ENCODE measurements at regions of chr1 and their contacts with region 1.

Region 1: DNA sequence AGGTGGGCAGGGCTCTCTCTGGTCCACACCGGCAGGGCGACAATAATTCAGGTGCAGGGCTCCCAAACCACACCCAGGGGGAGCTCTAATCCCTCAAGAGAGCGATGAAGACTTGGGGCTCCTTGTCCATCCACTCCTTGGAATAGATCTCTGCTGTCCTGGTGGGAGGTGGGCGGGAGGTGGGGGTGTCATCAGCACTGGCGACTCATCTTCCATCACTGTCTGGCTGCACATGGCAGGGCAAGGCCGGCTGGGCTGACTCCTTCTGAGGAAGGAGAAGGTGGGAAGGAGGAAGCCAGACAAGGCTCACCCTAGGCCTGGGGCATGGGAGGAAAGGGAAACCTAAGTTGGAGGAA is 29.3 kb downstream of the TNNT2 start:
- DNase-seq: peak; percentile 53
- ATAC-seq: peak; percentile 93
- H3K4me3 ChIP-seq: no peak overlapping the region
- H3K27ac ChIP-seq: no peak overlapping the region
- H3K4me1 ChIP-seq: peaks cover 2 to 15% of the 10 kb centered on the region in 2 experiments; a peak in 3 of 4 replicates
- H3K27me3 ChIP-seq: peaks cover 12% of the 10 kb centered on the region; the same call in 1 of the 2 replicates
- CTCF ChIP-seq: peak; percentile 79 to 80 (median 79)
- POLR2A ChIP-seq: no peak
- RAD21 ChIP-seq: peak; percentile 72

Region 2: DNA sequence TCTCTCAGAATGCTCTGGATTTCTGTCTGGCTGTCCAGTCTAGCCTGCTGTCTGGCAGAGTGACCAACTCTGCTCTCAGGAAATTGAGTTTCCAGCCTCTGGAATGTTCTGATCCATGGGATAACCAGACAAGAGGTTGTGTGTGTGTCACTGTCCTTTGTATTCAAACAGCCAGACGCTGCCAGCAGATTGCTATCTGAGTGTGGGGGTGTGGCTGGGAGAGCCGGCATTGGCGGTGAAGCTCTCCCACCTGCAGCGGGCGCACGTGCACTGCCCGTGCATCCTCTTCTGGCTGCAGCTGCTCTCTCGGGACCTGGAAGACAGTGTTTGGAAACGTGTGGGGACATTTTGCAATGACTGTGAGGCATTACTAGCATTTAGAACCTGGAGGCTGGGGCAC is 38.8 kb before region 1 on chr1:
- CTCF ChIA-PET with region 1: interaction called, 14 read pairs
- POLR2A ChIA-PET with region 1: no interaction called
- RAD21 ChIA-PET with region 1: no interaction called
- intact Hi-C with region 1: no loop called
- DNase-seq: peak; percentile 39
- ATAC-seq: peak; percentile 74
- H3K4me3 ChIP-seq: no peak overlapping the region
- H3K27ac ChIP-seq: no peak overlapping the region
- H3K4me1 ChIP-seq: peaks cover 36 to 60% of the 10 kb centered on the region in 2 experiments
- H3K27me3 ChIP-seq: no peaks in the 10 kb centered on the region
- CTCF ChIP-seq: peak in 2 of 3 experiments; percentile 12 to 51; a peak in 4 of 6 replicates
- POLR2A ChIP-seq: no peak
- RAD21 ChIP-seq: peak; percentile 73

Region 3: DNA sequence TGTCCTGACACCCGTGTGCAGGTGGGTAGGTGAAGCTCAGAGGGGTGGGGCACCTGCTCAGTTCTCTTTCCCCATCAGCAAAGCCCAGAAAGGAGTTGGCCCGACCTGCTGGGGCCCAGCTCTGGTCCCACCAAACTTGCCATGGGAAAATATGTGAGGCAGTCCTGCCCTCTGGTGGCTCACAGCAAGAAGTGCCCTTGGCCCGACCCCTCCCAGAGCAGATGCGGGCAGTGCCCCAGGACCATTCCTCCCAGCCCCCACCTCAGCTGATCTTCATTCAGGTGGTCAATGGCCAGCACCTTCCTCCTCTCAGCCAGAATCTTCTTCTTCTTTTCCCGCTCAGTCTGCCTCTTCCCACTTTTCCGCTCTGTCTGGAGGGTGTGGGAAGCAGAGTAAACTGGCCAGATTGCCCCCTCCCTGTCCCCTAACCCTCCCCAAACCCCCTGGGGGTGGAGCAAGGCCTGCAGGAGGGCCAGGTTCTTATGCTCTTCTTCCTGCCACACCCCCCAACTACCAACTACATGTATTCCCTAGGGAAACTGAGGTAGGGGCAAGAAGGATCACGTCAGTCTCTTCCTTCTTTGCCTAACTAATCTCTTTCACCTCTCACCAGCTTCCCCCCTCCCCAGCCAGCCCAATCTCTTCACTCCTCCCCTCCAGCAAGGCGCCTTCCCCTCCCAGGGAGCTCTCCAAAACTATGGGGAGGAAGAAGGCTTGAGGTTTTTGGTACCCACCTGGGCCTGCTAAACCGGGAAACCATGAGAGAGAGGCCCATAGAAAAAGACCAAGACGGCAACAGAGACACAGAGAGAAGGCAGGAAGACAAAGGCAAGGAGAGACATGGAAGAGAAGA is 13.7 kb after region 1 on chr1:
- CTCF ChIA-PET with region 1: interaction called, 17 read pairs
- POLR2A ChIA-PET with region 1: no interaction called
- RAD21 ChIA-PET with region 1: interaction called in 1 of 2 experiments, 4 read pairs
- intact Hi-C with region 1: no loop called
- DNase-seq: peak; percentile 32
- ATAC-seq: peak; percentile 93
- H3K4me3 ChIP-seq: no peak overlapping the region
- H3K27ac ChIP-seq: no peak overlapping the region
- H3K4me1 ChIP-seq: no peaks in the 10 kb centered on the region
- H3K27me3 ChIP-seq: peaks cover 9% of the 10 kb centered on the region; the same call in 1 of the 2 replicates
- CTCF ChIP-seq: peak; percentile 79 to 91 (median 88)
- POLR2A ChIP-seq: no peak
- RAD21 ChIP-seq: peak; percentile 99

Measured in HCT116 (cell line).